Right ventricle myocardium inferior (tissue), 1 donor: ENCODE measurements at regions of chr5 and their contacts with region 1.

Region 1: DNA sequence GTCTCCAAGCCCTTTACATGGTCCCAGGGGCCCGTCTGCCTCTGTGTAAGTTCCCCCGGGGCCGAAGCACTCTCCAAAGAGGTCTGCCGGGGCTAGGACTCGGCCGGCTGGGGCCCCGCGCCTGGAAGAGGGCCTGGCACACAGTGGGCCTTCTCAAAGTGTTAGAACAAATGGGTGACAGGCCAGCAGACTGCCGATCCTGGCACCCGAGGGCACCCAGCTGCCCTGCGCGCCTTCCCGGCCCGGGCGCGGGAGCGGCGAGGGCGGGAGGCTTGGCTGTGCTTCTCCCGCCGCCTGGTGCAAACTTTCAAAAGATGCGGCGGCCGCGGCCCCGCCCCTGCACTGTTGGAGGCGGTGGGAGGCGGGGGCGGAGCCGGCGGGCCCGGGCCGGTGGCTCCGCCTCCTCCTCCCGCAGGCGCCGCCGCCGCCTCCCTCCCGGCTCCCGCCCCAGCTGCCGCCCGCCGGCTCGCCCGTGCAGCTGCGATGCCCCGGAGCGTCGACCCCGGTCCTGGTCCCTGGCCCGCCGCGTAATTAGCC is at the start of gene NEURL1B:
- DNase-seq: peak; percentile 91
- ATAC-seq: peak; percentile 89
- total RNA-seq, gene NEURL1B: 37.1 TPM

Region 2: GRCh38 chr5:172479044-172479783 is 161.7 kb before region 1 on chr5:
- intact Hi-C with region 1: loop called (anchors 2 kb)
- DNase-seq: peak; percentile 89
- ATAC-seq: peak; percentile 97

Region 3: DNA sequence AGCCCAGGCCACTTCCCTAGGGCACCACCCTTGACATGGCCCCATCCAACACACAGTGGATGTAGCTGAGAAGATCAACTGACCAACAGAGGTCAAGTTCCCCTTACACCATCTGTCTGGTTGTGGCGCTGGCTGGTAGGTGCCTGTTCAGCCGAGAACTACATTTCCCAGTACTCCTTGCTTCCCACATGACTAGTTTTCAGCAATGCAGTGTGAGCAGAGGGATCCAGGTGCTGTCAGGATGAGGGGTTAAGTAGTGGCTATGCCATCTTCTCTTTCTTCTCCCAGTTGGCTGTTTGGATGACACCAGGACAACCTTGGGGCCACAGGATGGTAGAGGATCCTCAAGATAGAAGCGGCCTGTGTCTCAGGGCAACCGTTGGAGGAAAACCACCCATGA is 137.9 kb before region 1 on chr5:
- intact Hi-C with region 1: loop called (anchors 5 kb)
- DNase-seq: no peak
- ATAC-seq: no peak

Region 4: GRCh38 chr5:172603251-172603806 is 37.6 kb before region 1 on chr5:
- intact Hi-C with region 1: loop called (anchors 5 kb)
- DNase-seq: no peak
- ATAC-seq: no peak

Region 5: GRCh38 chr5:172770675-172771438 is 130.0 kb after region 1 on chr5 and contains the start of gene DUSP1:
- intact Hi-C with region 1: no loop called
- DNase-seq: peak; percentile 100
- ATAC-seq: peak; percentile 73
- total RNA-seq, gene DUSP1: 103 TPM